Activated CD8-positive, alpha-beta T cell treated with anti-CD3 and anti-CD28 coated beads for 36 hours (primary cell): ENCODE measurements at regions of chr1 and their contacts with region 1.

Region 1: GRCh38 chr1:26541816-26542711 is 12.5 kb downstream of the RPS6KA1 start:
- DNase-seq: peak; percentile 96
- ATAC-seq: peak; percentile 78
- H3K4me3 Mint-ChIP-seq: peak overlapping the region; percentile 92
- H3K27ac Mint-ChIP-seq: peak overlapping the region; percentile 97
- H3K4me1 Mint-ChIP-seq: peaks cover 79% of the 10 kb centered on the region
- H3K27me3 Mint-ChIP-seq: no peaks in the 10 kb centered on the region
- CTCF ChIP-seq: peak; percentile 81

Region 2: DNA sequence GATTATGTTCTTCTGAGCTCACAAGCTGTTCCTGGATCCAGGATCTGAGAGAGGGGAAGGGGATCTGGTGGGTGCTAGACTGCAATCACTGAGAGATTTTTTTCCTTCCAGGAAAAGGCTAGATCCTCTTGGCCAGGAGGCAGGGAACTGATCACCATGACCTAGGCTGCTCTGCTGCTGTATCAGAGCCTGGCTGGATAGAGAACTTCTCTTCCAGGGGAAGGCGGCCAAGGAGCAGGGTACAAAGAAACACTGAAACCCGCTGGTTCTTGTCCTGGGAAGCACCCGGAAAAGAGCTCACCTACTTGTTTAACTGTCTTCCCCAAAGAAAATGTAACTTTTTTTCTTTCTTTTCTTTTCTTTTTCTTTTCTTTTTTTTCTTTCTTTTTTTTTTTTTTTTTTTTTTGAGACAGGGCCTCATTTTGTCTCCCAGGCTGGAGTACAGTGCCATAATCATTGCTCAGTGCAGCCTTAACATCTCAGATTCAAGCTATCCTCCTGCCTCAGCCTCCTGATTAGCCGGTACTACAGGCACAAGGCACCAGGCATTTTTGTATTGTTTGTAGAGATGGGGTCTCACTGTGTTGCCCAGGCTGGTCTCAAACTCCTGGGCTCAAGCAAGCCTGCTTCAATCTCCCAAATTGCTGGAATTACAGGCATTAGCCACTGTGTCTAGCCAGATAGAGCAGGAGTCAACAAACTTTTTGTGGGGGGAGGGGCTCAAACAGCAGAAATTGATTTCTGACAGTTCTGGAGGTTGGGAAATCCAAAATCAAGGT is 24.9 kb before region 1 on chr1:
- CTCF ChIA-PET with region 1: interaction called, 16 read pairs
- POLR2A ChIA-PET with region 1: no interaction called
- intact Hi-C with region 1: no loop called
- DNase-seq: no peak
- ATAC-seq: no peak
- H3K4me3 Mint-ChIP-seq: no peak overlapping the region
- H3K27ac Mint-ChIP-seq: no peak overlapping the region
- H3K4me1 Mint-ChIP-seq: no peaks in the 10 kb centered on the region
- H3K27me3 Mint-ChIP-seq: no peaks in the 10 kb centered on the region
- CTCF ChIP-seq: no peak

Region 3: GRCh38 chr1:26529655-26530409 is 12.2 kb before region 1 on chr1 and contains the start of gene RPS6KA1:
- CTCF ChIA-PET with region 1: interaction called, 26 read pairs
- POLR2A ChIA-PET with region 1: interaction called, 13 read pairs
- intact Hi-C with region 1: no loop called
- DNase-seq: peak; percentile 61
- ATAC-seq: peak; percentile 94
- H3K4me3 Mint-ChIP-seq: peak within 1 kb of the TSS; percentile 82
- H3K27ac Mint-ChIP-seq: peak within 1 kb of the TSS; percentile 84
- H3K4me1 Mint-ChIP-seq: peaks cover 22% of the 10 kb centered on the region
- H3K27me3 Mint-ChIP-seq: peaks cover 3% of the 10 kb centered on the region
- CTCF ChIP-seq: no peak
- total RNA-seq, gene RPS6KA1: 139 TPM

Region 4: DNA sequence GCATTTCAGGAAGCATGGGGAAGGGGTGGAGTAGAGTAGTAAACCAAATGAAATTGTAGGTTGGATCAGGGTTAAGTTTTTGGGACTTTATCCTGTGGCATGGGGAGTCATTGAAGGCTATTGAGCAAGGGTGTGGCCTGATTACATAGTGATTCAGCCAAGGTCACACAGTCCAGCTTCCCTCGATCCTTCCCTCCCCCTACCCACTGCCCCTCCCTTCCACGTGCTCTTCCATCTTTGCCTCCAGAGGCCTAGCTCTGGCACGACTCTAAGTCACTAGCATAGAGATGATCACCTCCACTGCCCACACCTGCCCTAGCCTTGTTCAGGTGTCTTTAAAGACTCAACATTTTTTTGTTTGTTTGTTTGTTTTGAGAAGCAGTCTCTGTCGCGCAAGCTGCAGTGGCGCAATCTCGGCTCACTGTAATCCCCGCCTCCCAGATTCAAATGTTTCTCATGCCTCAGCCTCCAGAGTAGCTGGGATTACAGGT is 650.0 kb after region 1 on chr1:
- CTCF ChIA-PET with region 1: no interaction called
- POLR2A ChIA-PET with region 1: no interaction called
- intact Hi-C with region 1: no loop called
- DNase-seq: no peak
- ATAC-seq: no peak
- H3K4me3 Mint-ChIP-seq: no peak overlapping the region
- H3K27ac Mint-ChIP-seq: no peak overlapping the region
- H3K4me1 Mint-ChIP-seq: no peaks in the 10 kb centered on the region
- H3K27me3 Mint-ChIP-seq: no peaks in the 10 kb centered on the region
- CTCF ChIP-seq: no peak